ENCODE measurements at regions of chr1 and their contacts with region 1.

Region 1: GRCh38 chr1:176193023-176193422 is 14.1 kb downstream of the COP1 start:
- DNase-seq: no peak
- H3K4me3 Mint-ChIP-seq: no peak overlapping the region
- H3K27ac Mint-ChIP-seq: no peak overlapping the region
- H3K4me1 Mint-ChIP-seq: peaks cover 74% of the 10 kb centered on the region
- H3K27me3 Mint-ChIP-seq: no peaks in the 10 kb centered on the region

Region 2: DNA sequence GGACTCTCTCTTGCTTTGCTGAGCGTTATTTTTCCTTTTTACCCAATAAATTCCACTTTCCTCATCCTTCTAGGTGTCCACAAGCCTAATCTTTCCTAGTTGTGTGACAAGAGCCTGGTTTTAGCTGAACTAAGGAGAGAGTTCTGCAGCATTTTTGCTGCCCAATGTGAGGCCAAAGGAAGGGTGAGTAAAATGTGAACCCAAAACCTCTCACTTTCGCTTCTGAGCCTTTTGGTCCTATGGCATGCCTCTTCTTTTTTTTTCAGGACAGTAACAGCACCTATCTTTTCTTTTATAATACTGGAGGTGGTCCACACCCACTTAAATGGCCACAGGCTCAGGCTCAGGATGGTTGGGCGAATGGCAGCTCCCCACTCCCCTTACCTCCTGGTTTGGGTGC is 97.0 kb before region 1 on chr1:
- CTCF ChIA-PET with region 1: no interaction called
- POLR2A ChIA-PET with region 1: no interaction called
- intact Hi-C with region 1: no loop called
- DNase-seq: no peak
- H3K4me3 Mint-ChIP-seq: no peak overlapping the region
- H3K27ac Mint-ChIP-seq: no peak overlapping the region
- H3K4me1 Mint-ChIP-seq: peaks cover 2% of the 10 kb centered on the region
- H3K27me3 Mint-ChIP-seq: no peaks in the 10 kb centered on the region

Region 3: GRCh38 chr1:176177764-176178163 is 15.3 kb before region 1 on chr1:
- CTCF ChIA-PET with region 1: no interaction called
- POLR2A ChIA-PET with region 1: no interaction called
- intact Hi-C with region 1: loop called (anchors 2 kb)
- DNase-seq: no peak
- H3K4me3 Mint-ChIP-seq: peak overlapping the region; percentile 26
- H3K27ac Mint-ChIP-seq: peak overlapping the region; percentile 68
- H3K4me1 Mint-ChIP-seq: peaks cover 37% of the 10 kb centered on the region
- H3K27me3 Mint-ChIP-seq: no peaks in the 10 kb centered on the region

Region 4: DNA sequence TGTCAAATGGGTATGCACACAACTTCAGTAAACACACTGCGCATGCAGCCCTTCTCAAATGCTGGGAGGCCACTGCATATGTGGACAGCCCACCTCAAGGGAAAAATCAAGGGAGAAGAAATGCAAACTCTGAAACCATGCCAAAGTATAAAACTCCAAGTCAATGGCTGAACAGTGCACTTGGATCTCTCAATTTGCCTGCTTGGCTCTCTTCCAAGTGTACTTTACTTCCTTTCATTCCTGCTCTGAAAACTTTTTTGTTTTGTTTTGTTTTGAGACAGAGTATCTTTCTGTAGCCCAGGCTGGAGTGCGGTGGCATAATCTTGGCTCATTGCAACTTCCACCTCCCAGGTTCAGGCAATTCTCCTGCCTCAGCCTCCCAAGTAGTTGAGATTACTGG is 32.9 kb after region 1 on chr1:
- CTCF ChIA-PET with region 1: no interaction called
- POLR2A ChIA-PET with region 1: no interaction called
- intact Hi-C with region 1: no loop called
- DNase-seq: no peak
- H3K4me3 Mint-ChIP-seq: no peak overlapping the region
- H3K27ac Mint-ChIP-seq: no peak overlapping the region
- H3K4me1 Mint-ChIP-seq: no peaks in the 10 kb centered on the region
- H3K27me3 Mint-ChIP-seq: no peaks in the 10 kb centered on the region

Measured in activated CD4-positive, alpha-beta memory T cell treated with anti-CD3 and anti-CD28 coated beads for 36 hours (primary cell).